MCF 10A (cell line): ENCODE measurements at regions of chr1 and their contacts with region 1.

Region 1: GRCh38 chr1:24594154-24594553 is 38.3 kb downstream of the NCMAP start:
- DNase-seq: peak; percentile 7
- H3K4me3 Mint-ChIP-seq: no peak overlapping the region
- H3K27ac Mint-ChIP-seq: no peak overlapping the region
- H3K4me1 Mint-ChIP-seq: peaks cover 14% of the 10 kb centered on the region
- H3K27me3 Mint-ChIP-seq: no peaks in the 10 kb centered on the region
- CTCF ChIP-seq: no peak

Region 2: DNA sequence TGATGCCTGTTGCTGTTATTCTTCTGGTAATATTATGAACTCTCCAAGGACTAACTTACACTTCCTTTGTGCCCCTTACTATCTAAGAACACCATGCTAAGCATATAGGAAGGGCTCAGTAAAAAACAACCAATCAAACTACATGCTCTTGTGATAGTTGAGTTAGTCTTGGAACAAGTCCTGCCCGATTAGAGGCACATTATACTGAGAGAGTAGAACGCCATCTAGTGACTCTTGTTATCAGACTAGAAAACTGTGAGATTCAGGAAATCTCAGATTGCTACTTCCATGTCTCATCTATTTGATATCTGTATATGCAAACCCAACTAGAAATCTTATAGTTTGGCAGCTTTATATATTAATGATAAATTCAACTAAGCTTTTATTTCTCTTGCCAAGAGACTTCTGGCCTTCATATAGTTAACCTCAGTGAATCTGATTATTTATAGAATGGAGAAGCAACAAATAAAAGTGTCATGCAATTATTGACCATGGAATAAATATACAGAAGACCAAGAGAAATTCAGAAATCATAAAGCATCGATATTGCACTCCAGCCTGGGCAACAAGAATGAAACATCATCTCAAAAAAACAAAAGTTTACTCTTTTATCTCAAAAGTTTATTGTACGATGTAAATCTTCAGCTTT is 41.2 kb after region 1 on chr1:
- CTCF ChIA-PET with region 1: interaction called, 9 read pairs
- POLR2A ChIA-PET with region 1: interaction called, 3 read pairs
- intact Hi-C with region 1: loop called (anchors 5 kb)
- DNase-seq: peak; percentile 72
- H3K4me3 Mint-ChIP-seq: no peak overlapping the region
- H3K27ac Mint-ChIP-seq: no peak overlapping the region
- H3K4me1 Mint-ChIP-seq: peaks cover 12% of the 10 kb centered on the region
- H3K27me3 Mint-ChIP-seq: peaks cover 22% of the 10 kb centered on the region
- CTCF ChIP-seq: peak; percentile 44